A673 (cell line): ENCODE measurements at regions of chr14 and their contacts with region 1.

Region 1: GRCh38 chr14:76827696-76828296 is 1.6 kb downstream of the LRRC74A start:
- DNase-seq: no peak
- H3K4me3 ChIP-seq: no peak overlapping the region
- H3K27ac ChIP-seq: no peak overlapping the region
- H3K4me1 ChIP-seq: no peaks in the 10 kb centered on the region
- H3K27me3 ChIP-seq: no peaks in the 10 kb centered on the region
- CTCF ChIP-seq: no peak

Region 2: GRCh38 chr14:76863724-76864407 is 36.1 kb after region 1 on chr14:
- CTCF ChIA-PET with region 1: no interaction called
- POLR2A ChIA-PET with region 1: interaction called, 10 read pairs
- intact Hi-C with region 1: no loop called
- DNase-seq: no peak
- H3K4me3 ChIP-seq: no peak overlapping the region
- H3K27ac ChIP-seq: no peak overlapping the region
- H3K4me1 ChIP-seq: no peaks in the 10 kb centered on the region
- H3K27me3 ChIP-seq: no peaks in the 10 kb centered on the region
- CTCF ChIP-seq: no peak